Dendritic cell treated with granulocyte-macrophage colony-stimulating factor and Interleukin-4, amounts not matched to agents 40 ng/mL and 50 ng/mL, for 4 days (primary cell): ENCODE measurements at regions of chr12 and their contacts with region 1.

Region 1: DNA sequence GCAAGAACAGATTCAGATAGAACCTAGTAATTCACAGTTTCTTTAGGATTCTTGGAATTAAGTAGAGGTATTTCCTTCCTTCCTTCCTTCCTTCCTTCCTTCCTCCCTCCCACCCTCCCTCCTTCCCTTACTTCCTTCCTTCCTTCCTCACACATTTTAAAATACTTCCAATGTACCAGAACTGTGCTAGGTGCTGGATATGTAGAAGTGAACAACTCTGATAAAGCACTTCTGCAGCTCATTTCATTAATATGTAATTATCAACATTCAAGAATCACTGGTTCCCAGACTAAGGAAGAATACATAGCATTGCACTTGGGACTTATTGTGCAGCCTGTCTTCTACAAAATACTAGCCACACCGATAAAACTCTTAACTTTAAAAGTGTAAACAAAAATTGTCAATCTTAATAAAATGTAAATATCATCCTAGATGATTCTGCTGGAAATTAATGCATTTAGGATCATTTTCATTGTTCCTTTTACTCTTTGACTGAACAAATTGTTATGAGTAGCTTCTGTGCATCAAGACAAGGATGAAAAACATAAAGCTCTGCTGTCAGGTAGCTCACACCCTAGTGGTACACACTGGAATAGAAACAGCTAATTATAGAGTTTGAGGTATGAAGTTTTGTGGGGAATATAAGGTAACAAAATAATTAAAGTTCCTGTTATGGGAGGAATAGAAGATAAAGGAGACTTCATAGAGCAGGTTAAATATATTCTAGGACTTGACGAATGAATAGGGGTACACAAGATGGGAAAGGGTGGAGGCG is 99.9 kb upstream of the MYF6 start:
- H3K4me3 Mint-ChIP-seq: no peak overlapping the region
- H3K27ac Mint-ChIP-seq: no peak overlapping the region
- H3K4me1 Mint-ChIP-seq: no peaks in the 10 kb centered on the region
- H3K27me3 Mint-ChIP-seq: no peaks in the 10 kb centered on the region

Region 2: GRCh38 chr12:80472902-80473500 is 134.5 kb before region 1 on chr12:
- intact Hi-C with region 1: loop called (anchors 10 kb)
- H3K4me3 Mint-ChIP-seq: no peak overlapping the region
- H3K27ac Mint-ChIP-seq: no peak overlapping the region
- H3K4me1 Mint-ChIP-seq: no peaks in the 10 kb centered on the region
- H3K27me3 Mint-ChIP-seq: no peaks in the 10 kb centered on the region

Region 3: DNA sequence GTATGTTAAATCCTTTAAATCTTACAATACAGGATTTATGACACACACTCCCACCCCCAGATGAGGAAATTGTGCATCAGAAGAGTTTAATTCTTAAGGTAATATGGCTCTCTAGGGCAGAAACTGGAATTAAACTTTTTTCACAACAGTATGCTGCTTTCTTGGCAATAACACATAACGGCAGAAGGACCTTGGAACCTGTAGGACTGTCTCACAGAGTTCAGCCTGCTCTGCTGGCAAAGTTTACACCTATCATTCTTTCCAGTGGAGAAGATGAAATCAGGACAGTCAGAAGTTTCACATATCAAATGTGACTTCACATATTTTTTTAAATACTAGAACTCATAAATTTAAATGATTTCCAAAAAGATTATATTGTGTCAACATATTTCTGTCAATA is 69.3 kb after region 1 on chr12:
- intact Hi-C with region 1: no loop called
- H3K4me3 Mint-ChIP-seq: no peak overlapping the region
- H3K27ac Mint-ChIP-seq: no peak overlapping the region
- H3K4me1 Mint-ChIP-seq: no peaks in the 10 kb centered on the region
- H3K27me3 Mint-ChIP-seq: no peaks in the 10 kb centered on the region